CD8-positive, alpha-beta T cell (primary cell): ENCODE measurements at regions of chr17 and their contacts with region 1.

Region 1: DNA sequence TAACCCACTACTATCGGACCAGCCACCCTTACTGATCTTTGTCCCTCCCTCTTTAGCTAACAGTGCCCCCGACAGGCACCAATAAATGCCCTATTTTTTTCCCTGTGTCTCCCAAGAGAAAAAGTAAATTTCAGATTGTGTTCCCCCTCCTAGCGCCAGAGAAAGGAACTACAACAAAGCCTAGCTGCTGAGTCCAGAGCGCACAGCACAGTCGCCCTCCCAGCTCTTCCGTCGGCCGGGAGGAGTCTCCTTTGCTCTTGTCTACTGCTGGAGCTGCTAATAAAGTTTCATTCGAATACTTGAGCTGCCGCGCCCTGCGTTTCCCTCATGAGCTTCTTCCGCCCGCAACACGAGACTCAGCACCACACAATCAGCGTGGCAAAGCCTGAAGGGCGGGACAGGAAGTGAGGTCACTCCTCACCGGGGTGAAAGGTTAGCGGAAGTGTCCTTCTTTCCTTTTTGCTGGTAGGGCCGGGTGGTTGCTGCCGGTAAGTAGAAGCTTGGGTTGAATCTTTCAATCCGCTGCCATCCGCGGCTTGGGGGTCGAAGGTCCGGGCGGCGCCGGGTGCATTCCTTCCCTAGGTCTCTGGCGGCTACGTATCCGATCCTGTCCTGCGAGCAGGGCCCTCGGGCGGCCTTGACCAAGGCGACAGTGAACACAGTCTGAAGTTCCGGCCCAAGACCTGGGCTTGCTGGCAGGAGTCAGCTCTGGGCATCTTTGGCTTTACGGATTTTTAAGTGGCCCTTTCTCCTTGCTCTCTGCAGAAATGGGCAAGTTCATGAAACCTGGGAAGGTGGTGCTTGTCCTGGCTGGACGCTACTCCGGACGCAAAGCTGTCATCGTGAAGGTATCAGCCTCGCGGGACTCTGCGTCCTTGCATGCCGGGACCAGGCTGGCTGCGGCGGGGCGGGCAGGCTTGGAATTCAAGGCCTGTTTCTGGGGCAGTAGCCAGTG is at the start of gene RPL27:
- DNase-seq: peak; percentile 95 to 100 (median 98)
- ATAC-seq: peak; percentile 93
- H3K4me3 ChIP-seq: peak within 1 kb of the TSS; percentile 61 to 89
- H3K4me3 Mint-ChIP-seq: peak within 1 kb of the TSS; percentile 94
- H3K27ac ChIP-seq: peak within 1 kb of the TSS; percentile 90 to 95
- H3K27ac Mint-ChIP-seq: peak within 1 kb of the TSS; percentile 99
- H3K4me1 ChIP-seq: peaks cover 16% of the 10 kb centered on the region
- H3K4me1 Mint-ChIP-seq: peaks cover 25% of the 10 kb centered on the region
- H3K27me3 ChIP-seq: no peaks in the 10 kb centered on the region
- H3K27me3 Mint-ChIP-seq: no peaks in the 10 kb centered on the region
- CTCF ChIP-seq: peak; percentile 90
- total RNA-seq, gene RPL27: 1,796 to 1,873 TPM

Region 2: GRCh38 chr17:42577532-42578281 is 420.6 kb before region 1 on chr17 and contains the start of gene PSMC3IP:
- CTCF ChIA-PET with region 1: no interaction called
- POLR2A ChIA-PET with region 1: interaction called, 4 read pairs
- intact Hi-C with region 1: loop called in 1 of 2 experiments (anchors 10 kb)
- DNase-seq: peak; percentile 73 to 94 (median 91)
- ATAC-seq: peak; percentile 91
- H3K4me3 ChIP-seq: peak within 1 kb of the TSS; percentile 97 to 98
- H3K4me3 Mint-ChIP-seq: peak within 1 kb of the TSS; percentile 99
- H3K27ac ChIP-seq: peak within 1 kb of the TSS; percentile 76 to 88
- H3K27ac Mint-ChIP-seq: peak within 1 kb of the TSS; percentile 94
- H3K4me1 ChIP-seq: peaks cover 15% of the 10 kb centered on the region
- H3K4me1 Mint-ChIP-seq: peaks cover 29% of the 10 kb centered on the region
- H3K27me3 ChIP-seq: no peaks in the 10 kb centered on the region
- H3K27me3 Mint-ChIP-seq: no peaks in the 10 kb centered on the region
- CTCF ChIP-seq: no peak
- total RNA-seq, gene PSMC3IP: 3.9 to 4.1 TPM

Region 3: DNA sequence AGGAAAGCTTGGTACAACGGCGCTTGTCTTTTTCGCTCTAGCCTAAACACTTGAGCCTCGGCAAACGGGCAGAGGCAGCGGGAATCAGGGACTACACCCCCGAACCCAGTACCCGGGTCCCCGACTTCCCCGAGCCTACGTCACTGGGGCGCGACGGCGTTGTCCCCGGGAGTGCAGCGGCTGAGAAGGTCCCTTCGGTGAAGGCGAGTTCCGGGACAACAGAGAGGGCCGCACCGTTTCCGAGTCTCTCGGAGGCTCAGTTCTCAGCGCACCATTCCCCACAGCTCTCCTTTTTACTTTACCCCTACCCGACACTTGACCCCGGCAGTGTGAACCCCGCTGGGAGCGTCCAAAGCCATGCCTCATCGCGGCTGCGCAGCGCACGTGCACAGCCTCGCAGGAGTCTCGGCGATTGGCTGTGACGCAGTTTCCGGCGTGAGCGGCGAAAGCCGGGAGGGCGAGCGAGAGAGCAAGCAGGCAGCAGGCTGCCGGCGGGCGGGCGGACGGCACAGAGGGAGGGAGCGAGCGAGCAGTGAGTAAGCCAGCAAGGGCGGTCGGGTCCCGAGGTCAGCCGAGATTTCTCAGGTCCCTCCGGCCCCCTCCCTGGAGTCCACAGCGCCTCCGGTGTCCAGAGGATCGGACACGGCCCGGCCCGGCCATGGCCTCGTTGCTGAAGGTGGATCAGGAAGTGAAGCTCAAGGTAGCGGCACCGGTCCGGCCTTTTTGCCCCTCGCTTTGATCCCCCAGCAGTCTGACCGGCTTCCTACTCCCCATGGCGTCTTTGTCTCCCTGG is 165.1 kb before region 1 on chr17 and contains the start of gene PSME3:
- CTCF ChIA-PET with region 1: no interaction called
- POLR2A ChIA-PET with region 1: interaction called, 5 read pairs
- intact Hi-C with region 1: loop called in 1 of 2 experiments (anchors 1 kb)
- DNase-seq: peak; percentile 75 to 95 (median 88)
- ATAC-seq: peak; percentile 87
- H3K4me3 ChIP-seq: peak within 1 kb of the TSS; percentile 93 to 100
- H3K4me3 Mint-ChIP-seq: peak within 1 kb of the TSS; percentile 97
- H3K27ac ChIP-seq: peak within 1 kb of the TSS; percentile 95
- H3K27ac Mint-ChIP-seq: peak within 1 kb of the TSS; percentile 99
- H3K4me1 ChIP-seq: peaks cover 17% of the 10 kb centered on the region
- H3K4me1 Mint-ChIP-seq: peaks cover 31% of the 10 kb centered on the region
- H3K27me3 ChIP-seq: no peaks in the 10 kb centered on the region
- H3K27me3 Mint-ChIP-seq: no peaks in the 10 kb centered on the region
- CTCF ChIP-seq: no peak
- total RNA-seq, gene PSME3: 74.1 to 74.2 TPM

Region 4: GRCh38 chr17:43125133-43125966 is 127.1 kb after region 1 on chr17 and contains the start of gene BRCA1:
- CTCF ChIA-PET with region 1: no interaction called
- POLR2A ChIA-PET with region 1: interaction called, 5 read pairs
- intact Hi-C with region 1: loop called (anchors 1 to 10 kb)
- DNase-seq: peak; percentile 86 to 99 (median 94)
- ATAC-seq: peak; percentile 99
- H3K4me3 ChIP-seq: peak within 1 kb of the TSS; percentile 63 to 74
- H3K4me3 Mint-ChIP-seq: peak within 1 kb of the TSS; percentile 94
- H3K27ac ChIP-seq: peak within 1 kb of the TSS; percentile 57 to 84
- H3K27ac Mint-ChIP-seq: peak within 1 kb of the TSS; percentile 92
- H3K4me1 ChIP-seq: peaks cover 15% of the 10 kb centered on the region
- H3K4me1 Mint-ChIP-seq: peaks cover 30% of the 10 kb centered on the region
- H3K27me3 ChIP-seq: no peaks in the 10 kb centered on the region
- H3K27me3 Mint-ChIP-seq: no peaks in the 10 kb centered on the region
- CTCF ChIP-seq: no peak
- total RNA-seq, gene BRCA1: 1.1 to 1.3 TPM

Region 5: GRCh38 chr17:43330876-43331639 is 332.8 kb after region 1 on chr17:
- CTCF ChIA-PET with region 1: interaction called, 16 read pairs
- POLR2A ChIA-PET with region 1: no interaction called
- intact Hi-C with region 1: no loop called
- DNase-seq: no peak
- ATAC-seq: no peak
- H3K4me3 ChIP-seq: no peak overlapping the region
- H3K4me3 Mint-ChIP-seq: no peak overlapping the region
- H3K27ac ChIP-seq: no peak overlapping the region
- H3K27ac Mint-ChIP-seq: no peak overlapping the region
- H3K4me1 ChIP-seq: peaks cover 7% of the 10 kb centered on the region
- H3K4me1 Mint-ChIP-seq: peaks cover 7% of the 10 kb centered on the region
- H3K27me3 ChIP-seq: no peaks in the 10 kb centered on the region
- H3K27me3 Mint-ChIP-seq: peaks cover 15% of the 10 kb centered on the region
- CTCF ChIP-seq: no peak

Region 6: DNA sequence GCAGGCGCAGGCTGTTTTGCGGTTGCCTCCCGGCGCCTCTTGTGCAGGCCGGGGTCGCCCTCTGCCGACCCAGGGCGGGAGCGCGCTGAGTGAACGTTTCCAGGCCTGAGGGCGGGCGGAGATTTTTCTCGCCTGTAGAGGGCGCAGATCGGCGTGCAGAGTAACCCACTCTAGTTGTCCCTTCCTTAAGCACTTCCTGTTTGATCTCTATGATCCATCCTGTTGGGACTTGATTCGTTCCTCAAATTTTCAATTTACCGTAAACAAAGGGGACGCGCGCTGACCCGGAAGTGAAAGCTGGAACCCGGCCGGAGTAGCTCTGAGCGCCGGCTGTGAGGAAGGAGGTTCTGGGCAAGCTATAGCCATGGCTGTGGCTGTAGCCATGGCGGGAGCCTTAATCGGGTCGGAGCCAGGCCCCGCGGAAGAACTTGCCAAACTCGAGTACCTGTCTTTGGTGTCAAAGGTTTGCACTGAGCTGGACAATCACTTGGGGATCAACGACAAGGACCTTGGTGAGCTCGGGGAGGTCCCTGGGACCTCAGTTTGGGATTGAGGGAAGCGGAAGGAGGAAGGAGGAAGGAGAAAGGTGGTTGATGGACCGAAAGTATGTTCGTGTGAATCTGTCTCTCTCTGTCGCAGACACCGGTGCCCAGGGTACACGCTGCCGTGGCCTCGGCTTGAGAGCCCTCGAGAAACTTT is 485.6 kb after region 1 on chr17 and contains the start of gene DHX8:
- CTCF ChIA-PET with region 1: interaction called, 3 read pairs
- POLR2A ChIA-PET with region 1: interaction called, 13 read pairs
- intact Hi-C with region 1: loop called in 1 of 2 experiments (anchors 1 kb)
- DNase-seq: peak; percentile 97 to 100 (median 99)
- ATAC-seq: peak; percentile 98
- H3K4me3 ChIP-seq: peak within 1 kb of the TSS; percentile 94 to 99
- H3K4me3 Mint-ChIP-seq: peak within 1 kb of the TSS; percentile 100
- H3K27ac ChIP-seq: peak within 1 kb of the TSS; percentile 87 to 91
- H3K27ac Mint-ChIP-seq: peak within 1 kb of the TSS; percentile 99
- H3K4me1 ChIP-seq: peaks cover 27% of the 10 kb centered on the region
- H3K4me1 Mint-ChIP-seq: peaks cover 37% of the 10 kb centered on the region
- H3K27me3 ChIP-seq: no peaks in the 10 kb centered on the region
- H3K27me3 Mint-ChIP-seq: no peaks in the 10 kb centered on the region
- CTCF ChIP-seq: peak; percentile 100
- total RNA-seq, gene DHX8: 125 to 130 TPM